ENCODE measurements at regions of chr17 and their contacts with region 1.

Region 1: GRCh38 chr17:28335201-28335955 is at the starts of genes IFT20 and TNFAIP1:
- DNase-seq: peak; percentile 99 to 100 (median 99)
- ATAC-seq: peak; percentile 96 to 98 (median 96)
- H3K4me3 ChIP-seq: peak within 1 kb of the TSS; percentile 70 to 99 (median 88)
- H3K27ac ChIP-seq: peak within 1 kb of the TSS; percentile 93 to 100 (median 98)
- H3K4me1 ChIP-seq: peaks cover 0 to 60% (median 54%) of the 10 kb centered on the region in 12 donors
- H3K27me3 ChIP-seq: no peaks in the 10 kb centered on the region
- CTCF ChIP-seq: no peak
- POLR2A ChIP-seq: peak; percentile 79 to 96
- total RNA-seq, gene IFT20: 7.9 to 16.7 (median 11.0) TPM
- total RNA-seq, gene TNFAIP1: 31.7 to 83.4 (median 50.3) TPM

Region 2: GRCh38 chr17:28282596-28282995 is 52.8 kb before region 1 on chr17:
- intact Hi-C with region 1: no loop called
- DNase-seq: no peak
- ATAC-seq: no peak
- H3K4me3 ChIP-seq: no peak overlapping the region
- H3K27ac ChIP-seq: no peak overlapping the region
- H3K4me1 ChIP-seq: peaks cover 0 to 11% (median 0%) of the 10 kb centered on the region in 12 donors
- H3K27me3 ChIP-seq: peaks cover 0 to 3% (median 0%) of the 10 kb centered on the region in 9 donors
- CTCF ChIP-seq: no peak
- POLR2A ChIP-seq: no peak

Region 3: DNA sequence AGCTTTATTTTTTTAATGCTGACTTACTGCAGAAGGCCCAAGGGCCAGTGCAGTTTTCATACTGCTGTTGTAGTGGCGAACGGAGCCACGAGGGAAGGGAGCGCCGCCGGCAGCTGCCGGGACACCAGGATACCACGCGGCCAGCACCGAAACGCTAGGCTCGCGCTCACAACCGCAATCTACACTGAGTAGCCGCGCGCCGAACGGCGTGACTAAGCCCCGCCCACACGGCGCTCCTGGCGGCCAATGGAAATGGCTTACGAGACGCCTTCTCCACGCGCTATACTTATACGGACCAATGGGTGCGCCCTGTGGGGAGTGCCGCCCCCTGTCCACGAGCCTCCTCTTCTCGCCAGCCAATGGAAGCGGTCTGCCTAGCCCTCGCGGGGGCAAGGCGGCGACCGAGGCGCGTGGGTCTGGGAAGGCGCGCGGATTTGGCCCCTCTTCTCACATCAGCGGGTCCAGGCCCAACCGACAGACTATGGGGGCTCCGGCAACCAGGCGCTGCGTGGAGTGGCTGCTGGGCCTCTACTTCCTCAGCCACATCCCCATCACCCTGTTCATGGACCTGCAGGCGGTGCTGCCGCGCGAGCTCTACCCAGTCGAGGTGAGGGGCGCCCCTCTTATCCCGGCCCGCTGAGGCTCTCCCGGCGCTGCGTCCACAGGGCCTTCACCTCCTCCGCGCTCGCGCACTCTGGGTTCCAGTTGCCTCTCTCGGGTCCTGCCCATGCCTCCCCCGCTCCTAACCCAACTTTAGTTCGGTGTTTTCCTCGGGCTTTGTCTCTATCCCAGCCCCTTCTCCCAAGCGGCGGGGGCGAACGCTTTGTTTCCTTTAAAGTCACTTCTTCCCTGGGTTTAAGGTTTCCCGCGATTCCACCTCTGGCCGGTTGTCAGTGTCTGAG is 16.4 kb before region 1 on chr17 and contains the start of gene TMEM97:
- intact Hi-C with region 1: loop called in 2 of 10 experiments (anchors 1 kb)
- DNase-seq: peak; percentile 96 to 98 (median 97)
- ATAC-seq: peak; percentile 99 to 100 (median 100)
- H3K4me3 ChIP-seq: peak within 1 kb of the TSS; percentile 28 to 82 (median 64)
- H3K27ac ChIP-seq: peak within 1 kb of the TSS in 6 of 12 donors; percentile 9 to 65 (median 40)
- H3K4me1 ChIP-seq: peaks cover 0 to 22% (median 15%) of the 10 kb centered on the region in 12 donors
- H3K27me3 ChIP-seq: no peaks in the 10 kb centered on the region
- CTCF ChIP-seq: peak in 5 of 12 donors; percentile 12 to 41 (median 22)
- POLR2A ChIP-seq: no peak
- total RNA-seq, gene TMEM97: 2.5 to 6.0 (median 3.3) TPM

Region 4: GRCh38 chr17:28357061-28357900 is 21.9 kb after region 1 on chr17 and contains the start of gene POLDIP2:
- intact Hi-C with region 1: loop called in 4 of 10 experiments (anchors 1 to 2 kb)
- DNase-seq: peak; percentile 96 to 98 (median 96)
- ATAC-seq: peak; percentile 99 to 100 (median 100)
- H3K4me3 ChIP-seq: peak within 1 kb of the TSS; percentile 64 to 99 (median 93)
- H3K27ac ChIP-seq: peak within 1 kb of the TSS; percentile 83 to 97 (median 92)
- H3K4me1 ChIP-seq: peaks cover 0 to 26% (median 18%) of the 10 kb centered on the region in 12 donors
- H3K27me3 ChIP-seq: no peaks in the 10 kb centered on the region
- CTCF ChIP-seq: peak in 3 of 12 donors; percentile 16 to 33 (median 29)
- POLR2A ChIP-seq: peak; percentile 52 to 97
- total RNA-seq, gene POLDIP2: 125 to 194 (median 163) TPM

Region 5: GRCh38 chr17:28371245-28372202 is 36.1 kb after region 1 on chr17 and contains the start of gene SARM1:
- intact Hi-C with region 1: no loop called
- DNase-seq: peak; percentile 91 to 95 (median 92)
- ATAC-seq: peak; percentile 78 to 90 (median 82)
- H3K4me3 ChIP-seq: peak within 1 kb of the TSS; percentile 47 to 85 (median 64)
- H3K27ac ChIP-seq: peak within 1 kb of the TSS; percentile 47 to 86 (median 78)
- H3K4me1 ChIP-seq: peaks cover 7 to 39% (median 25%) of the 10 kb centered on the region in 12 donors
- H3K27me3 ChIP-seq: no peaks in the 10 kb centered on the region
- CTCF ChIP-seq: no peak
- POLR2A ChIP-seq: peak in 1 of 2 donors; percentile 27
- total RNA-seq, gene SARM1: 4.7 to 11.3 (median 8.5) TPM

Region 6: GRCh38 chr17:28426081-28426519 is 90.7 kb after region 1 on chr17:
- intact Hi-C with region 1: no loop called
- DNase-seq: no peak
- ATAC-seq: peak in 1 of 4 donors; percentile 38
- H3K4me3 ChIP-seq: no peak overlapping the region
- H3K27ac ChIP-seq: no peak overlapping the region
- H3K4me1 ChIP-seq: no peaks in the 10 kb centered on the region
- H3K27me3 ChIP-seq: peaks cover 0 to 9% (median 0%) of the 10 kb centered on the region in 9 donors
- CTCF ChIP-seq: peak in 3 of 12 donors; percentile 18 to 27 (median 18)
- POLR2A ChIP-seq: no peak

Measured in heart left ventricle (tissue), 16 donors.